ENCODE measurements at regions of chr13 and their contacts with region 1.

Region 1: DNA sequence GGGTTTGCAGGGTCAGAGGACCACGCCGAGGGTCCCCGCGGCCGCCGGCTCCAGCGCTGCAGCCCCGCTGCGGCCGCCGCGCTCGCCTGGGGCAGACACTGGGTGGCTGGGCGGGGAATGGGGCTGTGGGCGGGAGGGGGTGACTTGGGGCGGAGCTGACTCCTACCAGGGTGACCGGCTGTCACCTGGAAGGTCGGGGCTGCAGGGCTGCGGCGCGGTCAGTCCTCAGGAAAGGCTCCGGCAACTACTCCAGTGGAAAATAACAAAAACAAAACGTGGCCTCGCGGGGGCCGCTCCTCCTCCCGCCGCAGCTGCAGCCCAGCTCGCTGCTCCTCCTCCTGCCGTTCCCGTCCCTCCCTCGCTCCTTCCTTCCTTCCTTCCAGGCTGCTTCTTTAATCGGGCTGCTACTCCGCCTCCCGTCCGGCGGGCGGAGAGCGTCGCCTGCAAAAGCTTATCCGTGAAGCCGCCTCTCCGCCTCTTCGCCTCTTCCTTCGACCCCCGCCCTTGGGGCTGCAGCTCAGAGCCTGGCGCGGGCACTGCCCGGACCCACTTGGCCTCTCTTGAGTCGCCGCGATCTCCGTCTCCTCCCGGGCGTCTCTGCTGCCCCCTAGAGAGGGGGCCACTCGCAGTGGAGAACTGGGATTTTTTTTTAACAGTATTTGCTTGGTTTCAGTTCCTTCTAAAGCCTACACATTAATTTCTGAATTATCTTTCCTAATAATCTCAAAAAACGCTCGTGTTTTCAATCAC is at the start of gene TBC1D4:
- DNase-seq: peak; percentile 87
- ATAC-seq: peak; percentile 88
- H3K4me3 ChIP-seq: peak within 1 kb of the TSS; percentile 92 to 94 (median 93)
- H3K27ac ChIP-seq: peak within 1 kb of the TSS; percentile 91
- H3K4me1 ChIP-seq: peaks cover 50% of the 10 kb centered on the region
- H3K27me3 ChIP-seq: no peaks in the 10 kb centered on the region; a peak in 2 of 5 replicates
- CTCF ChIP-seq: peak; percentile 84
- EP300 ChIP-seq: peak in 1 of 2 experiments; percentile 58; a peak in 2 of 4 replicates
- POLR2A ChIP-seq: peak; percentile 51 to 77; a peak in 3 of 4 replicates
- RAD21 ChIP-seq: peak; percentile 85
- total RNA-seq, gene TBC1D4: 35.9 and 55.4 TPM in 2 replicates

Region 2: DNA sequence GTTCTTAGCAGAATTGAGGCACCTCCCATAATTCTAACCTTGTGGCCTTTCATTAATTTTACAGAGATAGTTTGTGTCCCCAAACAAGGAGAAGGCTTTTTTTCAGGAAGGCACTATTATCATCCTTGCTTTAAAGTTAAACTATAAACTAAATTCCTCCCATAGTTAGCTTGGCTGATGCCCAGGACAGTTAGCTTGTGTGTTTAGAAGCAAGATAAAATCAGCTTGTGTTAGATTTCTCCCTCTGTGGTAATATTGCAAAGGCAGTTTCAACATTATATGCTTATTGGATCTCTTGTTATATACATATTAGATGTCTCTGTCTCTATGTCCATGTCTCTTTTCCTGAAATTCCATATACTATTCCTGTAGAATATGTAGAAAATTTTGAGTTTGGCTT is 343.0 kb before region 1 on chr13:
- CTCF ChIA-PET with region 1: no interaction called
- POLR2A ChIA-PET with region 1: no interaction called
- in situ Hi-C with region 1: no loop called
- intact Hi-C with region 1: no loop called
- DNase-seq: no peak
- ATAC-seq: no peak
- H3K4me3 ChIP-seq: no peak overlapping the region
- H3K27ac ChIP-seq: no peak overlapping the region
- H3K4me1 ChIP-seq: no peaks in the 10 kb centered on the region
- H3K27me3 ChIP-seq: no peaks in the 10 kb centered on the region
- CTCF ChIP-seq: no peak
- EP300 ChIP-seq: no peak
- POLR2A ChIP-seq: no peak
- RAD21 ChIP-seq: no peak

Region 3: DNA sequence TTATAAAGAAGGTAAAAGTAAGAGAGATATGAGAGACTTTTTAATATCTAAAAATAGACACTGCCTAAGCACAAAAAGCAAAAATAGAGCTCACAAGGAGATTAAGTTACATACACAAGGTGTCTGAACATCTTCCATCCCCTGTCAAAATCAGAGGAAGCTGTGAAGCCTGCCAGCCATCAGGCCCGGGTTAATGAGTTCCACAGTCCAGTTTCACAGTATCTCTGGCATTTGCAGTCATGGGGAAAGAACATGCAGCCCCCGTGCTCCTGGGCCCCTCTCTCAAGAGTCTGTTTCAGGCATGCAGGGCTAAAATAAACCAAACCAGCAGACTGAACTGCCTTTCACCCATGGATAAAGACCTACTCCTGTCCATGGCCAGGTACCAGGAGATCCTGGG is 79.5 kb before region 1 on chr13:
- CTCF ChIA-PET with region 1: no interaction called
- POLR2A ChIA-PET with region 1: interaction called, 5 read pairs
- in situ Hi-C with region 1: no loop called
- intact Hi-C with region 1: loop called (anchors 5 kb)
- DNase-seq: peak; percentile 45
- ATAC-seq: peak; percentile 86
- H3K4me3 ChIP-seq: no peak overlapping the region
- H3K27ac ChIP-seq: peak overlapping the region; percentile 46
- H3K4me1 ChIP-seq: peaks cover 86% of the 10 kb centered on the region
- H3K27me3 ChIP-seq: no peaks in the 10 kb centered on the region
- CTCF ChIP-seq: no peak
- EP300 ChIP-seq: no peak
- POLR2A ChIP-seq: no peak
- RAD21 ChIP-seq: no peak

Region 4: DNA sequence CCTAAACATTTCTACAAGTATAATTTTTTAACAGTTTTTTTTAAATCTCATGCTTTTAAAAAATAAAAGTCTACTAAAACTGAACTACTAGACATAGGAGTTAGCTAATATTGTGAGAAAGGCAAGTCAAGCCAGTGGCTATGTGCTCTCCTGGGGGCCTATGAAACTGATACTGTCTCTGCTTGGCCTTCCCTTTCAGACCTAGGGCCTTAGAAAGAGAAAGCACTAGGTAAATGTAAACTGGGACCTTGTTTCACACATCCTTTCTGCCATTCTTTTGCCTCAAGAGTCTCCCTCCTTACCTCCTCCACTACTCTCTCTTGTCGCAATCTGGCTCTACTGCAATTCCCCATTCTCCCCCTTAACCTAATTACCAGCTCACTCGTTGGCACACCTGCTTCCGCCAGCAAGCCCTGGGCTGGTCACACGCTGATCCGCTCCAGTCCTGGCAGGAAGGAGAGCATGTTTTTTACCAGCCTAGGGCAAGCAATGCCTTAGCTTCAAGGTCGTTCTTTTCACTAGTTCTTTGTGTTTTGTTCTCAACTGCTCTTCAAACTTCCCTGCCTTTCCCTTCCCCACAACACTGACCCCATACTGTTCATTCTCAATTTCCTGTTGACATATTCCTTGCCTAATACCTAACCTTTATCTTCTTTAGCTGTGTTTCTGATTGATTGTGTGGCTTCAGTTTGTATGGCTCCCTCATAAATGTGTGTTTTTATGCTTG is 23.4 kb before region 1 on chr13:
- CTCF ChIA-PET with region 1: no interaction called
- POLR2A ChIA-PET with region 1: interaction called, 52 read pairs
- in situ Hi-C with region 1: no loop called
- intact Hi-C with region 1: loop called (anchors 1 kb)
- DNase-seq: peak; percentile 97
- ATAC-seq: peak; percentile 98
- H3K4me3 ChIP-seq: peak overlapping the region; percentile 25 to 49 (median 32); a peak in 5 of 6 replicates
- H3K27ac ChIP-seq: peak overlapping the region; percentile 93
- H3K4me1 ChIP-seq: peaks cover 94% of the 10 kb centered on the region
- H3K27me3 ChIP-seq: no peaks in the 10 kb centered on the region
- CTCF ChIP-seq: no peak
- EP300 ChIP-seq: peak in 1 of 2 experiments; percentile 94; a peak in 2 of 4 replicates
- POLR2A ChIP-seq: peak; percentile 41 to 62; a peak in 3 of 4 replicates
- RAD21 ChIP-seq: peak; percentile 23; the same call in 1 of the 2 replicates

Region 5: DNA sequence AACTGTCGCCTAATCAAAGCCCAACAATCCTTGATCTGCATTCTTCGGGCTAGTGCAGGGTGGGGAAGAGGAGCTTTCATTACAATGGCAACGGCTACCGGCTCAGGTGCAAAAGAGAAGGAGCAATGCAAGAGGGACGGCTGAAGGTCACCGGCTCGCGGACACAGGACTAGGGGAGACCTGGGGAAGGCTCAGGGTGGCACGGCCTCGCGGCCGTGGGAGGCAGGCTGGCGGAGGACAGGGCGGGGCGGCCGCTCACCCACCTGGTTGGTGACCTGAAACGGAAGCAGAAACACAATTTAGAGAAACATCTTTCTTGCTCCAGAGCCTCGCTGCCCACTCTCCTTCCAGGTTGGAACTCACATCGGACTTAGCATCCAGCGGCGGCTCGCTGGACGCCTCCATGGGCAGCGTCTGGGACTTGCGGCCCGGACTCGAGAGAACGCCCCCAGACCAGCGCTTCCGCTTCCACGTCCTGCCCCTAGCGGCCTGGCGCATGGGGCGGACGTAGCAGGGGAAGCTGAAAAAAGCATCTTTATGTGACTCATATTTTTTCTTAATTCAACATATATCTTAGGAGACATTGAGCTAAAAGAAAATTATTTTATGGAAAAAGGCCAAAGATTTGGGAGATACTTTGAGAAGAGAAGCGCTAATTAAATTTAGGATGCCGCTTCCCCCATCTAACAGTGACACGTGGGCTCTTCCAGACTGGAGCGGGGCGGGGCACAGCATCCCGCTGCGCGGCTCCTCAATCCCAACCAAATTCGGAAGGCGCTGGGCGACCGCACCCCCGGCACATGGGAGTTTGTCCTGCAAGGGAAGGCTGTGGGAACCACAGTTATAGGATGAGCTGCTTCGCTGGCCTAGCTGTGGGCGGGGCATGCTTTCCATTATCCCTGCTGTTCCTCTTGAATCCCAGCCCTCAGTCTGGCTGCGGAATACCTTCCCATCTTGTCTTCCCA is 55.4 kb after region 1 on chr13 and contains the start of gene COMMD6:
- CTCF ChIA-PET with region 1: no interaction called
- POLR2A ChIA-PET with region 1: no interaction called
- in situ Hi-C with region 1: no loop called
- intact Hi-C with region 1: loop called (anchors 2 kb)
- DNase-seq: peak; percentile 72
- ATAC-seq: peak; percentile 98
- H3K4me3 ChIP-seq: peak within 1 kb of the TSS; percentile 71 to 91 (median 85)
- H3K27ac ChIP-seq: peak within 1 kb of the TSS; percentile 63
- H3K4me1 ChIP-seq: peaks cover 37% of the 10 kb centered on the region
- H3K27me3 ChIP-seq: no peaks in the 10 kb centered on the region
- CTCF ChIP-seq: no peak
- EP300 ChIP-seq: no peak
- POLR2A ChIP-seq: peak; percentile 89 to 95
- RAD21 ChIP-seq: no peak; the same call in 1 of the 2 replicates
- total RNA-seq, gene COMMD6: 97.0 and 110 TPM in 2 replicates

Measured in HepG2 (cell line).